Ovary (tissue), 10 donors: ENCODE measurements at regions of chr5 and their contacts with region 1.

Region 1: DNA sequence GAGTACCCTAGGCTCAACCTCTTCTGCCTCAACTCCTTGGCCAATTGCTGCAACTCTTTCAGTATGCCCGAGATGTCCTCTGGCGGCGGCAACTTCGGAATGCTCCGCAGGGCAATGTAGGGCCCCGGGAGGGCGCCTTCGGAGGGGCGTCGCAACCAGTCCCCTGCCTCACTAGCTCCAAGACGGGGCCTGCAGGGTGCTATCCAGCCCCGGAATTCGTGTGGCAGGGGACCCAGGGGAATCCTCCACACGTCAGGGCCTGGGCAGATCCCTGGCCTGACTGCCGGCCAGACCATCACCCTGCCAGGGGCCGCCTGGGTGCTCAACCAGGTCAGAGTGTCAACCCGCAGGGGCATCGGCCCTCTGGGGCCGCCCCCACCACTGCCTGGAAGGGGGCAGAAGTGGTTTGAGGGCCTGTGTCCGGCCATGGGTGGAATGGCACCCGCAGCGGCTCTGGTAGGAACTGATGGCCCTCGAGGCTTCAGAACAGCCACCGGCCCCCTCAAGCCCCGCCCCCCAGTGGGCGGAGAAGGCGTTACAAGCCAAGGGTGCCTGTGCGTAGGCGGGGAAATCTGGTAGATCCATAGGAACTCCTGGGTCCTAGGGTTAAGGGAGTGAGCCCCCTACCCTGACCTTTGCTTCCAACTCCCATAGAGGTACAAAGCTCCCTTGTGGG is at the start of gene POU5F2:
- DNase-seq: peak in 1 of 5 donors; percentile 14
- H3K4me3 ChIP-seq: no peak within 1 kb of the TSS
- H3K27ac ChIP-seq: no peak within 1 kb of the TSS
- H3K4me1 ChIP-seq: no peaks in the 10 kb centered on the region
- H3K27me3 ChIP-seq: no peaks in the 10 kb centered on the region
- CTCF ChIP-seq: no peak
- EP300 ChIP-seq: no peak
- POLR2A ChIP-seq: no peak
- total RNA-seq, gene POU5F2: 0.69 to 3.0 (median 1.2) TPM

Region 2: DNA sequence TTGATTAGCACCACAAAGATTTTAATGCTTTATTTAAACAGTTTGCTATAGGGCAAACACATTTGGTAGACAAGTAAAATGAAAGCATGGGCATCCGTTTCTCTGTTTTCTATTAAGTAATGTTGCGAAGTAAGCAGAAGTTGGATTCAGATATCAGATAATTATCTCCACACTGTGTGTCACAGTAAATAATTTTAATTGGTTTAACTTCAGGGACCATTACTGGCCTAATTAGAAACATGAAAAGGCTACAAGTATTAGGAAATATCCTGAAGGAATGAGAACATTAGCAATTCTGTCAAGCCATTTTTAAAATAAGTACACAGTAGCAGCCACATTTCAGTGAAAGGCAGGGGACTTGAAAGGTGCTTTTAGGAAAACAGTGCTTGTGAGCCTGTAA is 1135.7 kb before region 1 on chr5:
- intact Hi-C with region 1: loop called in 1 of 4 experiments (anchors 5 kb)
- DNase-seq: no peak
- H3K4me3 ChIP-seq: no peak overlapping the region
- H3K27ac ChIP-seq: no peak overlapping the region
- H3K4me1 ChIP-seq: no peaks in the 10 kb centered on the region
- H3K27me3 ChIP-seq: no peaks in the 10 kb centered on the region
- CTCF ChIP-seq: no peak
- EP300 ChIP-seq: no peak
- POLR2A ChIP-seq: no peak